Aorta (tissue), 5 donors: ENCODE measurements at regions of chr3 and their contacts with region 1.

Region 1: GRCh38 chr3:53938645-53939044 is 47.0 kb upstream of the SELENOK start:
- DNase-seq: no peak
- ATAC-seq: no peak
- H3K4me3 ChIP-seq: no peak overlapping the region
- H3K27ac ChIP-seq: no peak overlapping the region
- H3K4me1 ChIP-seq: no peaks in the 10 kb centered on the region
- H3K27me3 ChIP-seq: no peaks in the 10 kb centered on the region

Region 2: DNA sequence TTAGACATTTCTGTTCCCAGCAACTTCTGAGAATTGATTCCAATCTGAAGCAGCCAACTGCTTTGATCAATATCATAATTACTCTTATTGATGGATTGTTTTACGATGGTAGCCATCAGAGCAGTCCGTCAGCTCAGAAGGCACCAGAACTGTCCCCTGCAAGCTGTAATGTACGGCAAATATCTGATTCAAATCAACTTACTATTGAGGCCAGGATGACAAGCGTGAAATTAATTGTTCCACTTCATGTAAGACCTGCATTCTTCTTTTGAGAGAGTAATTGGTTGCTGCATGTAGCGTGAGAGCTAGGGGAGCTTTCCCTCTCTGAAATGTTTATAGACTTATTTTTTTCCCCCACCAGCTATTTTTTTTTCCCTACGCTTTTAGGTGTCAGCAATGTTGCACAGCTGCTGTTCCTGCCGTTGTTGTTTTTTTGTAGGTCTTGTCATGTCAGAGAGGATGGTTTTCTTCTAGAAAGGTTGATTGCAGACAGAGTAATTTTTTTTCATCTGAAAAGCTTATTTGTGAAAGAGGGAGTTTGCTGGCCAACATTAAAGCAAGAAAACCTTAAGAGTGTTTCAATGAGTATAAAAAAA is 318.6 kb after region 1 on chr3:
- intact Hi-C with region 1: no loop called
- DNase-seq: no peak
- ATAC-seq: no peak
- H3K4me3 ChIP-seq: no peak overlapping the region
- H3K27ac ChIP-seq: no peak overlapping the region
- H3K4me1 ChIP-seq: no peaks in the 10 kb centered on the region
- H3K27me3 ChIP-seq: no peaks in the 10 kb centered on the region

Region 3: GRCh38 chr3:54366839-54367238 is 428.2 kb after region 1 on chr3:
- intact Hi-C with region 1: loop called in 1 of 2 experiments (anchors 5 kb)
- DNase-seq: no peak
- ATAC-seq: no peak
- H3K4me3 ChIP-seq: no peak overlapping the region
- H3K27ac ChIP-seq: no peak overlapping the region
- H3K4me1 ChIP-seq: no peaks in the 10 kb centered on the region
- H3K27me3 ChIP-seq: no peaks in the 10 kb centered on the region

Region 4: DNA sequence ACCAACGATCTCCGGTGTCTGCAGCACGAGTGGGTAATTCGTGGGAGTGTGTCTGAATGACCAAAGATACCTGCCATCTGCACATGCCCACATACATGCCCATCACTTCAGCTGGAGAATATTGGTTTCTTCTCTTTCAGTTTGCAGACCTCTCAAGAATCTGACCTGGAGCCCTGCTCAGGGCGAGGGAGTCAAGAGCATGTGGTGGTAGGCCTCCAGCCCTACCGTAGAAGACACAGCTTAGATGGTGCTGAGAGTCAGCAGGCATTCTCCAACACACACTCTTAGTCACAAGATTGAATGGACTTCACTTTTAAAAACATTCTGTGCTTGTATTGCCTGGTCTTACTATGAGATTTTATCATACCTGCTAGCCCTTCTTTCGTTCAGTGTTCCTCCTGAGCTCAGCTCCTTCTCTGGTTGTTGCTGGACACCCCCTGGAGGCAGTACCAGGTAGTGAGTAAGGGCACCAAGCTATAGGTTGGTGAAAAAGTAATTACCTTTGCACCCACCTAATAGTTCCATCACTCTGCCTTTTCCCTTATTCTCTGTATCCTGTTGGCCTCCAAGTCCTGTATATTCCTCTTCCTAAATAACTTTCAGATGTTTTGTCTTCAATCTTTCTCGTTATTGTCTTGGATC is 435.7 kb after region 1 on chr3:
- intact Hi-C with region 1: loop called (anchors 5 kb)
- DNase-seq: no peak
- ATAC-seq: no peak
- H3K4me3 ChIP-seq: no peak overlapping the region
- H3K27ac ChIP-seq: no peak overlapping the region
- H3K4me1 ChIP-seq: no peaks in the 10 kb centered on the region
- H3K27me3 ChIP-seq: no peaks in the 10 kb centered on the region